Heart left ventricle (tissue), 16 donors: ENCODE measurements at regions of chr21 and their contacts with region 1.

Region 1: GRCh38 chr21:44510508-44511210 is 29.3 kb downstream of the KRTAP10-1 start:
- DNase-seq: peak; percentile 30 to 80 (median 47)
- ATAC-seq: peak in 3 of 4 donors; percentile 37 to 70 (median 62)
- H3K4me3 ChIP-seq: peak overlapping the region in 1 of 12 donors; percentile 25
- H3K27ac ChIP-seq: no peak overlapping the region
- H3K4me1 ChIP-seq: peaks cover 0 to 14% (median 0%) of the 10 kb centered on the region in 12 donors
- H3K27me3 ChIP-seq: peaks cover 0 to 27% (median 0%) of the 10 kb centered on the region in 9 donors
- CTCF ChIP-seq: peak; percentile 59 to 79 (median 71)
- POLR2A ChIP-seq: no peak

Region 2: DNA sequence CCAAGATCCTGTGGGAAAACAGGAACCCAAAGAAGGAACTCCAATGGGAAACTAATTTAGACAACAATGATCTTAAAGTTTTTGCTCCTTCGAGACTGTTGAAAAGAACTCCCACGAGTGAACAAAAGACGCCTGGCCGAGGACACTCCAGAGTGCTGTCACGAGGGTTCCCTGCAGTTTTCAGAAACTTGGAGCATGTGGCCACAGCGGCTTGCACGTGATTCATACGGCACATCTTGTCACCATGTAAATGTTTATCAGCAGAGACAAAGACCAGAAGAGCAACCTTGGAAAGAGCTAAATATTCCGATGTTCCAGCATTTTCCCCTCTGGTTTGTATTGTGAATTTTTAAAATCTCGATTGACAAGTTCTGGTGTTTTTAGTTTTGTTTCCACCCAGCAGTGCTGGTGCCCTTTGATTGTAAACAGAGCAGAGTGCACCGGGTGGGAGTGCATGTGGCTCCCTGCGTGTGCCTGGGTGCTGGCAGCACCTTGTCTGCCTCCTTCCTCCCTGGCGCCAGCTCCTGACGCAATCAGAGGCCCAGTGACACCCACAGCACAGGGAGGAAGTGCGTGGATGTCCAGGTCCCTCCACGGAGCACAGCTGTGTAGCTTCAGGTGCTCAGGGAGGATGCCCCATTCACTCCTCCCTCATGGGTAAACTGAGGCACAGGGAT is 32.4 kb before region 1 on chr21:
- intact Hi-C with region 1: no loop called
- DNase-seq: no peak
- ATAC-seq: peak in 3 of 4 donors; percentile 38 to 74 (median 52)
- H3K4me3 ChIP-seq: no peak overlapping the region
- H3K27ac ChIP-seq: peak overlapping the region in 5 of 12 donors; percentile 17 to 64 (median 55)
- H3K4me1 ChIP-seq: peaks cover 0 to 17% (median 3%) of the 10 kb centered on the region in 12 donors
- H3K27me3 ChIP-seq: peaks cover 0 to 8% (median 0%) of the 10 kb centered on the region in 9 donors
- CTCF ChIP-seq: no peak
- POLR2A ChIP-seq: no peak

Region 3: GRCh38 chr21:44742418-44743153 is 231.9 kb after region 1 on chr21:
- intact Hi-C with region 1: loop called in 7 of 10 experiments (anchors 2 to 10 kb)
- DNase-seq: no peak
- ATAC-seq: no peak
- H3K4me3 ChIP-seq: no peak overlapping the region
- H3K27ac ChIP-seq: no peak overlapping the region
- H3K4me1 ChIP-seq: no peaks in the 10 kb centered on the region
- H3K27me3 ChIP-seq: peaks cover 0 to 3% (median 0%) of the 10 kb centered on the region in 9 donors
- CTCF ChIP-seq: peak in 9 of 12 donors; percentile 8 to 42 (median 32)
- POLR2A ChIP-seq: no peak

Region 4: GRCh38 chr21:44761011-44761729 is 250.5 kb after region 1 on chr21:
- intact Hi-C with region 1: no loop called
- DNase-seq: no peak
- ATAC-seq: no peak
- H3K4me3 ChIP-seq: no peak overlapping the region
- H3K27ac ChIP-seq: no peak overlapping the region
- H3K4me1 ChIP-seq: peaks cover 0 to 7% (median 0%) of the 10 kb centered on the region in 12 donors
- H3K27me3 ChIP-seq: no peaks in the 10 kb centered on the region
- CTCF ChIP-seq: no peak
- POLR2A ChIP-seq: no peak

Region 5: GRCh38 chr21:44911389-44912157 is 400.9 kb after region 1 on chr21:
- intact Hi-C with region 1: loop called in 1 of 10 experiments (anchors 10 kb)
- DNase-seq: peak; percentile 69 to 89 (median 81)
- ATAC-seq: peak; percentile 85 to 89 (median 88)
- H3K4me3 ChIP-seq: peak overlapping the region in 1 of 12 donors; percentile 35
- H3K27ac ChIP-seq: peak overlapping the region in 6 of 12 donors; percentile 35 to 88 (median 45)
- H3K4me1 ChIP-seq: peaks cover 0 to 97% (median 7%) of the 10 kb centered on the region in 12 donors
- H3K27me3 ChIP-seq: no peaks in the 10 kb centered on the region
- CTCF ChIP-seq: peak in 4 of 12 donors; percentile 26 to 53 (median 32)
- POLR2A ChIP-seq: no peak

Region 6: GRCh38 chr21:44927587-44928461 is 417.2 kb after region 1 on chr21:
- intact Hi-C with region 1: loop called in 1 of 10 experiments (anchors 5 kb)
- DNase-seq: peak in 4 of 5 donors; percentile 45 to 84 (median 66)
- ATAC-seq: peak in 3 of 4 donors; percentile 15 to 63 (median 52)
- H3K4me3 ChIP-seq: peak overlapping the region in 4 of 12 donors; percentile 10 to 57 (median 29)
- H3K27ac ChIP-seq: peak overlapping the region in 3 of 12 donors; percentile 44 to 93 (median 56)
- H3K4me1 ChIP-seq: peaks cover 0 to 91% (median 22%) of the 10 kb centered on the region in 12 donors
- H3K27me3 ChIP-seq: peaks cover 2 to 37% (median 20%) of the 10 kb centered on the region in 9 donors
- CTCF ChIP-seq: no peak
- POLR2A ChIP-seq: no peak